Transverse colon (tissue), 4 donors: ENCODE measurements at regions of chr14 and their contacts with region 1.

Region 1: GRCh38 chr14:61444215-61444768 is 122.9 kb downstream of the PRKCH start:
- DNase-seq: peak; percentile 38
- H3K4me3 ChIP-seq: no peak overlapping the region
- H3K27ac ChIP-seq: no peak overlapping the region
- H3K4me1 ChIP-seq: peaks cover 4 to 9% (median 6%) of the 10 kb centered on the region in 4 donors
- H3K27me3 ChIP-seq: no peaks in the 10 kb centered on the region
- CTCF ChIP-seq: no peak
- EP300 ChIP-seq: no peak
- POLR2A ChIP-seq: no peak

Region 2: GRCh38 chr14:61315313-61315712 is 129.0 kb before region 1 on chr14:
- in situ Hi-C with region 1: loop called in 1 of 4 experiments (anchors 10 kb)
- intact Hi-C with region 1: no loop called
- DNase-seq: no peak
- H3K4me3 ChIP-seq: no peak overlapping the region
- H3K27ac ChIP-seq: no peak overlapping the region
- H3K4me1 ChIP-seq: no peaks in the 10 kb centered on the region
- H3K27me3 ChIP-seq: no peaks in the 10 kb centered on the region
- CTCF ChIP-seq: no peak
- EP300 ChIP-seq: no peak
- POLR2A ChIP-seq: no peak

Region 3: GRCh38 chr14:61406198-61406597 is 38.1 kb before region 1 on chr14:
- in situ Hi-C with region 1: no loop called
- intact Hi-C with region 1: no loop called
- DNase-seq: no peak
- H3K4me3 ChIP-seq: no peak overlapping the region
- H3K27ac ChIP-seq: no peak overlapping the region
- H3K4me1 ChIP-seq: no peaks in the 10 kb centered on the region
- H3K27me3 ChIP-seq: no peaks in the 10 kb centered on the region
- CTCF ChIP-seq: no peak
- EP300 ChIP-seq: no peak
- POLR2A ChIP-seq: no peak